ENCODE measurements at regions of chr7 and their contacts with region 1.

Region 1: GRCh38 chr7:137898839-137899721 is 52.3 kb upstream of the DGKI start:
- DNase-seq: peak; percentile 62
- H3K4me3 Mint-ChIP-seq: peak overlapping the region; percentile 8
- H3K27ac Mint-ChIP-seq: peak overlapping the region; percentile 37
- H3K4me1 Mint-ChIP-seq: peaks cover 47% of the 10 kb centered on the region
- H3K27me3 Mint-ChIP-seq: no peaks in the 10 kb centered on the region

Region 2: GRCh38 chr7:135977007-135977741 is 1921.9 kb before region 1 on chr7 and contains the start of gene MTPN:
- intact Hi-C with region 1: loop called (anchors 5 kb)
- DNase-seq: peak; percentile 98
- H3K4me3 Mint-ChIP-seq: peak within 1 kb of the TSS; percentile 98
- H3K27ac Mint-ChIP-seq: peak within 1 kb of the TSS; percentile 88
- H3K4me1 Mint-ChIP-seq: peaks cover 75% of the 10 kb centered on the region
- H3K27me3 Mint-ChIP-seq: peaks cover 2% of the 10 kb centered on the region
- total RNA-seq, gene MTPN: 117 and 119 TPM in 2 replicates

Region 3: DNA sequence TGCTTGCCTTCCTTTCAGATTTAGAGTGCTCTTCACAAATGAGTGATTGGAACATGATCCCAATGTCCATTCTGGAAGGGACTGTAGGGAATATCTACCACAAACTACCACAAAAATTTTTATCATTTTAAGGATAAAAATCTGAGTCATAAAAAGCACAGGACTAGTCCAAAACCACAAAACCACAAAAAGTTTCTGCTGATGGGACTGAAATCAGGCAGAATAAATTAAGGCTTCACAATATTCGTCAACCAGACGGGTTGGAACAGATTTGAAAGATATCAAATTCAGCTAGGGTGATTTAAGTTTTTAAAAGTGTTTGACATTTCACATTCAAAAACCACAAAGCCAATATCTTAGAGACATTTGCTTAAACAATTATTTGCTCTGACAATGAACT is 455.5 kb before region 1 on chr7:
- intact Hi-C with region 1: no loop called
- DNase-seq: no peak
- H3K4me3 Mint-ChIP-seq: no peak overlapping the region
- H3K27ac Mint-ChIP-seq: no peak overlapping the region
- H3K4me1 Mint-ChIP-seq: no peaks in the 10 kb centered on the region
- H3K27me3 Mint-ChIP-seq: no peaks in the 10 kb centered on the region

Region 4: GRCh38 chr7:137772748-137773147 is 126.3 kb before region 1 on chr7:
- intact Hi-C with region 1: loop called (anchors 2 kb)
- DNase-seq: no peak
- H3K4me3 Mint-ChIP-seq: peak overlapping the region; percentile 72
- H3K27ac Mint-ChIP-seq: peak overlapping the region; percentile 42
- H3K4me1 Mint-ChIP-seq: peaks cover 11% of the 10 kb centered on the region
- H3K27me3 Mint-ChIP-seq: no peaks in the 10 kb centered on the region

Region 5: DNA sequence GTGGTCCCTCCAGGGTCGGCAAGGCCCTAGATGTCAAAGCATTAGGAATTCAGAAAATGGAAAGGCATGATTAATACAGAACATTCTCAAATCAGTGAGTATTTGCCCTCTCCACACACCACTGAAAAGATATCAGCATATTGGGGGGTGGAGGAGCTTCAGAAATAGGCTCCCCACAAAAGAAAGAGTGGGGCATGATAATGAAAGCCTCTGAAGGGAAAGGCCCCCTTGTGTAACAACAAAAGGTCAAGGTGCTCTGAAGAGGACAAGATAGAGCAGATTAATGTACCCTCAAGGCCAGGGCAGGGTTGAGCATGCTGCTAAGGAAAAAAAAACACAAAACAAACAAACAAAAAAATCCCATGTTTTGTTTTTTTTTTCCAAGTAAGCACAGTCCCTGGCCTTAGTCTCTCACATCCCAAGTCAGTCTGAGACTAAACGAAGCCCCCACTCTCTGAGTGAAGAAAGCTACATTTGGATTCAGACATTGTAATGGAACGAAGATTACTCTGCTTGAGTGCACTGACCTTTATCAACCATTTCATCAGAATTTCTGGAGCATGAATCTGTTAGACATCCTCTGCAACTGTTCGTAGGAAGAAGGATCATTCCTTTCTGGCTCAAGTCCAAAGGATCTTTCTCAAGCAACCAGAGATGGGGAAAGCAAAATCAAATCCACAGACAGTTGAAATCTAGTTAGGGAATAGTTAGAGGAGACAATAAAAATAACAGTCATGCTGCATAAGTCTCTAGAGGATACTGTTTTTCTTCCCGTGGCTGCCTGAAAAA is 24.9 kb before region 1 on chr7:
- intact Hi-C with region 1: loop called (anchors 1 kb)
- DNase-seq: no peak
- H3K4me3 Mint-ChIP-seq: no peak overlapping the region
- H3K27ac Mint-ChIP-seq: peak overlapping the region; percentile 88
- H3K4me1 Mint-ChIP-seq: peaks cover 38% of the 10 kb centered on the region
- H3K27me3 Mint-ChIP-seq: no peaks in the 10 kb centered on the region

Region 6: DNA sequence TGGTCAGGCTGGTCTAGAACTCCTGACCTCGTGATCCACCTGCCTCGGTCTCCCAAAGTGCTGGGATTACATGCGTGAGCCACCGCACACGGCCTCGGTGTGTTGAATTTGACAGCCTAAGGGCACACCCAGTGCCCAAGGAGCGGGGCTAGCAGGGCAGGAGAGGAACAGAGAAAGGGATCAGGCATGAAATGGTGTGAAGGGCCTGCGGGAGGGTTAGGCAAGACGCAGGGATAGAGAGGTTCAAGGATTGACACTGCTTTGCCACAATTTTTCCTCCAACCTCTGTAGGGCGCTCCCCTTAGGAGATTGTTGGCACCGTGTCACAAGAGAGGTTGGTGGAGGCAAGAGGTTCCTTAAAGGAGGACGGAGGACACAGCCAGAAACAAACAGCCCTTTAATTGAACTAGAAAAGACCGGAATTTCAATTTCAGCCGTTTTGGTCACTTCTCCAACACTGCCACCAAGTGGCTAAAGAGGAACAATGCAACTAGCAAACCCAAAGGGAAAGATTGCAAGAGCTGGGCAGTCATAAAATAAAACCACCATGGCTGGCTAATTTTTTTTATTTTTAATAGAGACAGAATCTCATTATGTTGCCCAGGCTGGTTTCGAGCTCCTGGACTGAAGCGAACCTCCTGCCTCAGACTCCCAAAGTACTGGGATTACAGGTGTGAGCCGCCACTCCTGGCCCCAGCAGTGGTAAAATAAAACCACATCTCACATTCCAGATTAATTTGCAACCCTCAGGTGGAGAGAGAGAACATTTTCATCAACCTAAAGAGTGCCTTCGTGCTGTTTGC is 109.7 kb after region 1 on chr7:
- intact Hi-C with region 1: loop called (anchors 1 kb)
- DNase-seq: peak; percentile 24
- H3K4me3 Mint-ChIP-seq: no peak overlapping the region
- H3K27ac Mint-ChIP-seq: no peak overlapping the region
- H3K4me1 Mint-ChIP-seq: peaks cover 6% of the 10 kb centered on the region
- H3K27me3 Mint-ChIP-seq: peaks cover 14% of the 10 kb centered on the region

Region 7: GRCh38 chr7:138865843-138866242 is 966.8 kb after region 1 on chr7:
- intact Hi-C with region 1: loop called (anchors 10 kb)
- DNase-seq: peak; percentile 49
- H3K4me3 Mint-ChIP-seq: no peak overlapping the region
- H3K27ac Mint-ChIP-seq: no peak overlapping the region
- H3K4me1 Mint-ChIP-seq: peaks cover 24% of the 10 kb centered on the region
- H3K27me3 Mint-ChIP-seq: peaks cover 4% of the 10 kb centered on the region

Measured in activated T-helper 1 cell treated with anti-CD3 and anti-CD28 coated beads, Interleukin-12 subunit alpha, Interleukin-12 subunit beta, Interleukin-2, Interleukin-4 antibody, amounts not matched to agents 30 ng/mL and 10 ng/mL and 1 ng/mL, durations not matched to agents 14 hours and 24 hours and 36 hours (primary cell).